Activated CD8-positive, alpha-beta T cell treated with anti-CD3 and anti-CD28 coated beads, Interleukin-2, amount 10 ng/mL, durations not matched to agents 7 days and 5 days (primary cell): ENCODE measurements at regions of chr5 and their contacts with region 1.

Region 1: DNA sequence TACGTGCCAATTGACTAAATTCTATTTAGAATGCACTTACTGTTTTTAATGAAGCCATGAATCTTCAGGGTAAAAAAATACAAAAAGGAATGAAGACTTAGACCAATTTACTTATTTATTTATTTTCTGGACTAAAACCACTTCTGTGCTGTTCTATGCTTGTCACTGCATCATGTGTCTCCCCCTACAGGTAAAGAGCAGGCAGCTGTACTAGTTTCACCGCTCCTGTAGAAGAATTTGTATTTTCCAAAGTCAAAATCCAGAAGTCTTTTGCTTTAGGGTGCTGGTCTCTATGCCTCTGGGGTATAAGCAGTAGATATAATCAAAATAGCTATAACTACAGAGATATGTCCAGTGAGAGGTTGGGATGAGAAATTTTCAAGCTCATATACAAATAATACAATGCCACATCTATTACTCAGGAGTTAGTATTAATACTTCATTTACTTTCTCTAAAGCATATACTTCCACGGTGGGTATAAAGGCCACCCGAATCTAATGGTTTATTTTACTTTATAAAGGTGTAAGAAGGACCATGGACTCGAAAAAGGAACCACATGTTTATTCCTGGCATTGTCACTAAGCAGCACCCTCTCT is 591.5 kb downstream of the RAB3C start:
- DNase-seq: peak; percentile 64
- ATAC-seq: peak; percentile 88
- H3K4me3 Mint-ChIP-seq: no peak overlapping the region
- H3K27ac Mint-ChIP-seq: no peak overlapping the region
- H3K4me1 Mint-ChIP-seq: peaks cover 41% of the 10 kb centered on the region
- H3K27me3 Mint-ChIP-seq: no peaks in the 10 kb centered on the region

Region 2: DNA sequence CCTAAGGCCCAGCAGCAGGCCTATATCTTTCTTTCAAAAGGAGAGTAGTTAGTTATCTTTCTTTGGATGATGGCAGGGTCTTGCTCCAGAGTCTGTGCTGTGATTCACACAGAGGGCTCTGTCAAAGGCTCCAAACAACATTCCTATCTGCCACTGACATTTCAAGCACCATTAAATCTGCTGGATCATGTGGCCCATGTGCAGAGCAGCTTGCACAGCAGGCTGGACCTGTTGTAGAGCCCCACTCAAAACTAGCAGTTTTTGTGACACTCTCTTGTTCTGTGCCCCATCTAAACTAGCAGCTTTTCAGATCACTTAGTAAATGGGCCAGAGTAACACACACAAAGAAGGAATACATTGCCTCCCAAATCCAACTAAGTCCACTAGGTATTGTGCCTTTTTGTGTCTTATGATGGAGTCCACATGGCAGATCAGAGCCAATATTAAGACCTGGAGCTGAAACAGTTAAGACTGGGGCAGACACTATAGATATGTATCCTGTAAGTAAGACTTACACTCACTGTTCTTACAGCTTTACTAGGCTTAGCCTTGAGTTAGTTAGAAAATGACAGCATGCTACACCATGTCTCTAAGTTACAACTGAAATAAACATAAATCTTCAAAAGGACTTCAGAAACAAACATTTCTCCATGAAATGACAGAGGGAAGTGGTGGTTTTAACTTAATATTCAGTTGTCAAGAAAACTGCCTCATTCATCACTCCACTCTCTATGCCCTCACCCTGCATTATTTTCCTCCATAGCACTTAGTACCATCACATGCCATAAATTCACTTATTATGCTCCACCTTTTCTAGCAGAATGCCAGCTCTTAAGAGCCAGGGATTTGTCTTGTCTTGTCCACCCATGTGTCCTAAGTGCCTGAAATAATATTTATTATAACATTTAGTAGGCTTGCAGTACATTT is 190.6 kb before region 1 on chr5:
- CTCF ChIA-PET with region 1: interaction called, 11 read pairs
- POLR2A ChIA-PET with region 1: no interaction called
- DNase-seq: no peak
- ATAC-seq: no peak
- H3K4me3 Mint-ChIP-seq: no peak overlapping the region
- H3K27ac Mint-ChIP-seq: peak overlapping the region; percentile 36
- H3K4me1 Mint-ChIP-seq: no peaks in the 10 kb centered on the region
- H3K27me3 Mint-ChIP-seq: no peaks in the 10 kb centered on the region

Region 3: DNA sequence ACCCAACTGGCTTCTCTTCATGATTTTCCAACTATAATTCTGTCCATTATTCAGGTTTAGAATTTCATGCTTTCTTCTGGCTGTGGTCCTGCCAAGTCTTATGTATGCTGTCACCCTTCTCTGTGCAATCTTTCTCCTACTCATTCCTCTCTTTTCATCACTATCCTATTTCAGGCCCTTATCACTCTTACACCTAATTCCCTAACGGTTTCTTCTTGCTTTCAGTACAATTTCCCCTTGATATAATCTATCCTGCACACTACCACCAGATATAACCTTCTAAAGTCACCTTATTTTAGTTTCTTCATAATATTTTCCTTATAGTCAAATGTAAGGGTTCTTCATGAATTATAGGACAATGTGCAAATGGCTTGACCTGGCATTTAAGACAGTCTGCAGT is 155.3 kb before region 1 on chr5:
- CTCF ChIA-PET with region 1: interaction called, 10 read pairs
- POLR2A ChIA-PET with region 1: no interaction called
- DNase-seq: no peak
- ATAC-seq: no peak
- H3K4me3 Mint-ChIP-seq: no peak overlapping the region
- H3K27ac Mint-ChIP-seq: peak overlapping the region; percentile 47
- H3K4me1 Mint-ChIP-seq: peaks cover 43% of the 10 kb centered on the region
- H3K27me3 Mint-ChIP-seq: no peaks in the 10 kb centered on the region

Region 4: GRCh38 chr5:59099270-59099994 is 74.9 kb before region 1 on chr5:
- CTCF ChIA-PET with region 1: interaction called, 27 read pairs
- POLR2A ChIA-PET with region 1: no interaction called
- DNase-seq: peak; percentile 75
- ATAC-seq: peak; percentile 97
- H3K4me3 Mint-ChIP-seq: peak overlapping the region; percentile 42
- H3K27ac Mint-ChIP-seq: peak overlapping the region; percentile 83
- H3K4me1 Mint-ChIP-seq: peaks cover 69% of the 10 kb centered on the region
- H3K27me3 Mint-ChIP-seq: no peaks in the 10 kb centered on the region

Region 5: DNA sequence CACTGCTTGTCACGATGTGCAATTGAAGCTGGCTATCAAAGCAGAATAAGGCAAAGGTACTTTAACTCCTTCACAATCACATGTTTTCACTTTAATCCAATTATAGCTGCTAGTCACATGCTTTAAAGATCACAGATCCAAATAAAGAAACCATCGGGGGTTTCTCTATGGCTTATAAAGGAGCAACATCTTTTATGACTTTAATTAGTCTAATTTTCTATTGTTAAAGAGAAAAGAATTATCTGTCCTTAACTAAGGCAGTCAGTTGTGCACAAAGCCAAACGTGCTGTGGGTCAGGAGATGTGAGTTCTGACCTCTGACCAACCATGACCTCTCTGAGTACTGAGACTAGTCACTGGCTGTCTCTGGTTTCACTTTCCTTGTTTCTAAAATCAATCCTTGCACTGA is 30.4 kb before region 1 on chr5:
- CTCF ChIA-PET with region 1: interaction called, 13 read pairs
- POLR2A ChIA-PET with region 1: no interaction called
- DNase-seq: no peak
- ATAC-seq: no peak
- H3K4me3 Mint-ChIP-seq: no peak overlapping the region
- H3K27ac Mint-ChIP-seq: no peak overlapping the region
- H3K4me1 Mint-ChIP-seq: peaks cover 27% of the 10 kb centered on the region
- H3K27me3 Mint-ChIP-seq: no peaks in the 10 kb centered on the region

Region 6: GRCh38 chr5:59164041-59164830 is 10.1 kb before region 1 on chr5:
- CTCF ChIA-PET with region 1: interaction called, 29 read pairs
- POLR2A ChIA-PET with region 1: no interaction called
- DNase-seq: no peak
- ATAC-seq: no peak
- H3K4me3 Mint-ChIP-seq: no peak overlapping the region
- H3K27ac Mint-ChIP-seq: no peak overlapping the region
- H3K4me1 Mint-ChIP-seq: peaks cover 27% of the 10 kb centered on the region
- H3K27me3 Mint-ChIP-seq: peaks cover 3% of the 10 kb centered on the region